HEK293 (cell line): ENCODE measurements at regions of chr11 and their contacts with region 1.

Region 1: GRCh38 chr11:62645956-62646824 is at the start of gene GANAB:
- H3K4me3 ChIP-seq: peak within 1 kb of the TSS; percentile 86
- H3K27ac ChIP-seq: peak within 1 kb of the TSS; percentile 83
- H3K4me1 ChIP-seq: peaks cover 3% of the 10 kb centered on the region; the same call in 1 of the 2 replicates
- CTCF ChIP-seq: 0 out of 2 replicates have a peak, but pooled peaks have one; percentile 12

Region 2: DNA sequence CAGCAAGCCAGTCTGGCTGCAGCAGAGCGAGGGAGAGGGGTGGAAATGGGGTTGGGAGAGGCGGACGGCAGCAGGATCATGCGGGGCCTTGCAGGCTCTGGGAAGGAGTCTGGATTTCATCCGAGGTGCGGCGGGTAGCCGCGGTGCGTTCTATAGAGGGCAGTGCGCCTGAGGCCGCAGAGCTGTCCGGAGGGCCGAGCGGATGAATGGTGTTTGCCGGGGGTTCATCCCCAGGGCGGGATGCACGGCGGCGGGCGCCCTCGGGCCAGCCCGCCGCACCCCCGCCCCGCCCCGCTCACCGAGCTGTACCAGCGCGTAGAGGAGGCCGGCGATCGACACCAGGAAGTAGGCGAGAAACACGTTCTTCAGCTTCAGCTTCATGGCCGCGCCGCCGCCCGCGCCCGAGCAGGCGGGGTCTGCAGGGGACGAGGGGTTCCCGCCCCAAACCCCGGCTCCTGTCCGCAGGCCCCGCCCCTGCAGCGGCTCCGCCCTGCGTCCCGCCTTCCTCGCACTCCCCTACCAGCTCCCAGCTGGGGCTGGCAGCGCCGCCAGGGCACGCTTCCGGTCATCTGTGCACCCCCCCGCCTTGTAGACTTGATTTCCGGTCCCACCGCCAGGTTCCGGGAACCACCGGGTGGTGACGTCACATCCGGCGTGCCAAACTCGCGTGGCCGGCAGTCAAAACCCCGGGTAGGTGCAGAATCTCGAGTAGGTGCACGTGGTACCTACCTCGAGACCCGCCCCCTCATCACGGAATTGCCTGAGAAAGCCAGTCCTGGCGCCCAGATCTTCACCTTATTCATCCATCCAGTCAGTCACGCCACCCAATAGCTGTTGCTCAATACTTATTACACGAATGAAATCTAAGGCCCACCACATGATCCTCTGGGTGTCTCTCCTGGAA is 24.4 kb before region 1 on chr11 and contains the start of gene B3GAT3:
- CTCF ChIA-PET with region 1: no interaction called
- POLR2A ChIA-PET with region 1: interaction called, 23 read pairs
- H3K4me3 ChIP-seq: peak within 1 kb of the TSS; percentile 71
- H3K27ac ChIP-seq: peak within 1 kb of the TSS; percentile 80
- H3K4me1 ChIP-seq: no peaks in the 10 kb centered on the region
- CTCF ChIP-seq: peak; percentile 5; the same call in 1 of the 2 replicates

Region 3: GRCh38 chr11:62931499-62932278 is 285.5 kb after region 1 on chr11:
- CTCF ChIA-PET with region 1: no interaction called
- POLR2A ChIA-PET with region 1: interaction called, 11 read pairs
- H3K4me3 ChIP-seq: no peak overlapping the region
- H3K27ac ChIP-seq: no peak overlapping the region
- H3K4me1 ChIP-seq: no peaks in the 10 kb centered on the region
- CTCF ChIP-seq: no peak